ENCODE measurements at regions of chr12 and their contacts with region 1.

Region 1: DNA sequence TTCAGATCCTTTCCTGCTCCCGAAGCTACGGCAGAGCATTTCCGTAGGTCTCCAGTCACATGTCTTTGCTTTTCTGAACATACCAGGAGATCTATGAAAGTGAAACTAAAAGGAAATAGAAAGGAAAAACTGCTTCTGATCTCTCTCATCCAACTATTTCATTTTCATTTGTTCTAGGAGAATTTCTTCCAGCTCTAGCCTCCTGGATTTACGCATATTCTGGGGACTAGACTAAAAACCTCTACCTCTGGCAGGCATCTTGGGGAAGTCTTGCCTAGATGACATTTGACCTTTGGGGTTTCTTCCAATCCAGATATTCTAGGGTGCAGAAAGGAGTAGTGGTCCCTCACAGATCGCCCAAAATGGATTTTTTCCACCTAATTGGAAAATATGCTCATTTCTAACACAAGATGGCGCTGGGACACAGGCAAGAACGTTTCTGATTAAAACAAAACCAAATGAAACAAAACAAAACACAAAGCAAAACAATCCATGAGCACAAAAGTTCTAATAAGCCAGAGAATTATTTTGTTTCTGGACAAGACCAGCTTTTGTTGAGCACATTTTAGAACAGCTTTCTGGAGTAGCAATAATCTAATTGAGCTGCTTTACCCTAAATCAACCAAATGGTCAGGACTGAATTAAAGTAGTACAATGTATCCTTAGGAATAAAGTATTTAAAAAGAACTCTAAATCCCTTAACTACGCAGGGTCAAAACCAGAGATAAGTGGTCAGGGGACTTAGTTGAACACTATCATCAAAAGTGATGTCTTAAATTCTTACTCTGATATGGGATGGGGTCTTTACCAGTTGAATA is 12.3 kb upstream of the PARP11 start:
- DNase-seq: peak; percentile 65 to 81 (median 76)
- H3K4me3 ChIP-seq: peak overlapping the region in 3 of 7 experiments; percentile 38 to 71 (median 45)
- H3K27ac ChIP-seq: no peak overlapping the region
- H3K4me1 ChIP-seq: peaks cover 0 to 27% (median 13%) of the 10 kb centered on the region in 4 experiments
- H3K27me3 ChIP-seq: no peaks in the 10 kb centered on the region

Region 2: DNA sequence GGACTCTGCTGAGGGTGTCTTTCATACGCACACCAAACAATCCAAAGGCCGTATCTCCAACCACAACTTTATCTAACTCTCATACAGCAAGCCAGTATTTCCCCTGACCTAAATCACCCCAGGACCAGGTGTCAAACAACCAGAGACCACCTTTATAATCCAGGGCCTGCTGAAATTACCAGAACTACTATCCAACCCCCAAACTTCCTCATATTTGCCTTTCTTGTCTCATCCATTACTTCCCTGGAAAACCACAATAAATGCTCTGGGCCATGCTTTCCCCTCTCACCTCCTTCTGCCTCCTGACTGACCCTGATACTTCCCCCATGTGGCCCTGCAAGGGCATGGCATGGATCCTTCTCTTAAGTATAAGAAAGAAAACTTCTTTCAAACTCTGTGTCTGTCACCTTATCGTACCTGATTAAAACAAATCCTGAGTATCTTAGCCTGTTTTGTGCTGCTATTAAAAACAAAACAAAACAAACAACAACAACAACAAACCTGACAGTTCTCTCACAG is 87.9 kb before region 1 on chr12:
- CTCF ChIA-PET with region 1: no interaction called
- POLR2A ChIA-PET with region 1: no interaction called
- DNase-seq: peak; percentile 25 to 62 (median 54)
- H3K4me3 ChIP-seq: no peak overlapping the region
- H3K27ac ChIP-seq: no peak overlapping the region
- H3K4me1 ChIP-seq: peaks cover 0 to 12% (median 5%) of the 10 kb centered on the region in 4 experiments
- H3K27me3 ChIP-seq: no peaks in the 10 kb centered on the region

Region 3: DNA sequence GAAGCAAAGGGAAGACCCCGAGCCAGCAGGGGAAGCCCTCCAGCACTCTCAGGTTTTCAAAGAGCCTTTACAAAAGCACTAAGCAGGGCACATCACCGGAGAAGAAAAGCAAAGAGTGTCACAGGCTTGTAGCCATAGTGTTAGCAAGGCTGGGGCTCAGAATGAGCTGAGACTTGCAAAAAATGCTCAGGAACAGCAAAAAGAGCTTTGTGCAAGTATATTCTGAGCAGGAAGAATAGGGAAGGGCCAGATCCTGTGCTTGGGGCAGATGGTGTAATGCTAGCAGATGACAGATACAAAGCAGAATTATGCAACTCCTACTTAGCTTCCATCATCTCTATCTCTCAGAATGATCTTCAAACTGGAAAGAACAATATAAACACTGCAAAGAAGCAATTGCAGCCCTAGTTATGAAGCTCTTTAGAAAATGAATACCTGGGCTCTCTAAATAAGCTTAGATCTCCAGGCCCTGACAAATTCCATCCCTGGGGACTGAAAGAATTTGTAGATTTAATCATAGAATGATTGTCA is 11.4 kb after region 1 on chr12:
- CTCF ChIA-PET with region 1: interaction called, 42 read pairs
- POLR2A ChIA-PET with region 1: no interaction called
- DNase-seq: peak in 2 of 3 donors; percentile 64 to 69
- H3K4me3 ChIP-seq: peak overlapping the region in 1 of 7 experiments; percentile 43
- H3K27ac ChIP-seq: peak overlapping the region in 1 of 2 experiments; percentile 77
- H3K4me1 ChIP-seq: peaks cover 10 to 43% (median 27%) of the 10 kb centered on the region in 4 experiments
- H3K27me3 ChIP-seq: no peaks in the 10 kb centered on the region

Region 4: DNA sequence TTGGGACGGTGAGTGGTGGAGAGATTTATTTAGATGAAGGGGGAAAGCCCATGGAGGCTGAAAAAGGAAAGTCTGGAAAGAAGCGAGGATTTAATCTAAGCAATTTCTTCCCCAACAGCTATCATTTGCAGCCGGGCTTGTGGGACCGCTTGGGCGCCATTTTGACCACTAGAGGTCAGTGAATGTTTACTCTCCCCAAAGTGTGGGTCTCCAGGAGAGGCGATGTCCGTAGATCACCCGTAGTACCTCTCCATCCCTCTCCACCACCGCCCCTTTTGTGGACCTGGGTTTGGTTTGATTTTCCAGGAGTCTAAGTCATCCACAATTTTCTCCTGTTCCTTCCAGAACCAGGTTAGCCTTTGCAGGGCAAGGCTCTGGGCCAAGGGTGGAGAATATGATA is 79.0 kb after region 1 on chr12:
- CTCF ChIA-PET with region 1: interaction called, 181 read pairs
- POLR2A ChIA-PET with region 1: interaction called, 3 read pairs
- DNase-seq: peak in 1 of 3 donors; percentile 26
- H3K4me3 ChIP-seq: no peak overlapping the region
- H3K27ac ChIP-seq: no peak overlapping the region
- H3K4me1 ChIP-seq: peaks cover 14 to 31% (median 20%) of the 10 kb centered on the region in 4 experiments
- H3K27me3 ChIP-seq: no peaks in the 10 kb centered on the region

Region 5: GRCh38 chr12:3988519-3989448 is 103.3 kb after region 1 on chr12:
- CTCF ChIA-PET with region 1: interaction called, 212 read pairs
- POLR2A ChIA-PET with region 1: no interaction called
- DNase-seq: peak; percentile 36 to 87 (median 82)
- H3K4me3 ChIP-seq: peak overlapping the region in 2 of 7 experiments; percentile 37 to 47
- H3K27ac ChIP-seq: peak overlapping the region in 1 of 2 experiments; percentile 29
- H3K4me1 ChIP-seq: peaks cover 3 to 13% (median 6%) of the 10 kb centered on the region in 4 experiments
- H3K27me3 ChIP-seq: no peaks in the 10 kb centered on the region

Region 6: DNA sequence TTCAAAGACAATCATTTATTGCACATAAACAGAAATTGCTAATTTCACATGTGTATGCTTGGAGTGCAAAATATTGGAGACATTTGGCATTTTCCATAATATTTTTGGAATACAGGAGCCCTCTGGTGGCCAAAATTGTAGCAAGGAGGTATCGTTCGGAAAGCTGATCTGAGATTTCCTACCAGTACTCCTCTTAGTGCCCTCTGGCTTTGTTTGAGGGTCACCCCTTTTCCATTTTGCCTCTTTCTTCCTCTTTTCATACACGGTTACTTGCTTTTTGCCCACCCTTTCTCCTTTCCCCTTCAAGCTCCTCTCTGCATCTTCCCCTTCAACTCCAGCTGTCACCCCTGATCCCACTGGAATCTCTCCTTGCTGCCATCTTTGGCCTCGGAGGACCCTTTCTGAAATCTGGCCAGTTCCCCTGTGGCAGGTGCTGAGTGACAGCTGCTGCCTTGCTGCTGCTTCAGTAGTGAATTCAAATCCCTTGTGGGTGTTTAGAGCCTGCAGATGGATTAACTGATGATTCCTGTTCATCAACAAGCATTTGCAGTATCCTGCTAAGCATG is 152.3 kb after region 1 on chr12:
- CTCF ChIA-PET with region 1: interaction called, 107 read pairs
- POLR2A ChIA-PET with region 1: no interaction called
- DNase-seq: peak; percentile 28 to 49 (median 48)
- H3K4me3 ChIP-seq: no peak overlapping the region
- H3K27ac ChIP-seq: no peak overlapping the region
- H3K4me1 ChIP-seq: peaks cover 0 to 6% (median 0%) of the 10 kb centered on the region in 4 experiments
- H3K27me3 ChIP-seq: no peaks in the 10 kb centered on the region

Region 7: DNA sequence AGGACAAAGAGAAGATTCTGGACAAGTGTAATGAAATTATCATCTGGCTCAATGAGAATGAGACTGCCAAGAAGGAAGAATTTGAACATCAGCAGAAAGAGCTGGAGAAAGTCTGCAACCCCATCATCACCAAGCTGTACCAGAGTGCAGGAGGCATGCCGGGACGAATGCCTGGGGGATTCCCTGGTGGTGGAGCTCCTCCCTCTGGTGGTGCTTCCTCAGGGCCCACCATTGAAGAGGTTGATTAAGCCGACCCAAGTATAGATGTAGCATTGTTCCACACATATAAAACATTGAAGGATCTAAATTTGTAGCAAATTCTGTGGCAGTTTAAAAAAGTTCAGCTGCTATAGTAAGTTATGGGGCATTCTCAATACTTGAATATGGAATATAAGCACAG is 213.8 kb after region 1 on chr12:
- CTCF ChIA-PET with region 1: interaction called, 10 read pairs
- POLR2A ChIA-PET with region 1: no interaction called
- DNase-seq: peak in 2 of 3 donors; percentile 41 to 45
- H3K4me3 ChIP-seq: no peak overlapping the region
- H3K27ac ChIP-seq: no peak overlapping the region
- H3K4me1 ChIP-seq: no peaks in the 10 kb centered on the region
- H3K27me3 ChIP-seq: no peaks in the 10 kb centered on the region

Region 8: GRCh38 chr12:4287325-4288211 is 402.1 kb after region 1 on chr12:
- CTCF ChIA-PET with region 1: interaction called, 125 read pairs
- POLR2A ChIA-PET with region 1: interaction called, 3 read pairs
- DNase-seq: peak in 2 of 3 donors; percentile 46 to 60
- H3K4me3 ChIP-seq: no peak overlapping the region
- H3K27ac ChIP-seq: no peak overlapping the region
- H3K4me1 ChIP-seq: peaks cover 0 to 57% (median 52%) of the 10 kb centered on the region in 4 experiments
- H3K27me3 ChIP-seq: no peaks in the 10 kb centered on the region

Measured in common myeloid progenitor, CD34-positive (primary cell).